Natural killer cell (primary cell): ENCODE measurements at regions of chr6 and their contacts with region 1.

Region 1: GRCh38 chr6:106979427-106979884 is 4.9 kb upstream of the CD24 start:
- DNase-seq: peak; percentile 65 to 86
- ATAC-seq: peak; percentile 63 to 88 (median 85)
- H3K4me3 ChIP-seq: no peak overlapping the region
- H3K4me3 Mint-ChIP-seq: no peak overlapping the region
- H3K27ac ChIP-seq: no peak overlapping the region
- H3K27ac Mint-ChIP-seq: no peak overlapping the region
- H3K4me1 ChIP-seq: peaks cover 4% of the 10 kb centered on the region
- H3K4me1 Mint-ChIP-seq: peaks cover 0 to 6% of the 10 kb centered on the region in 2 donors
- H3K27me3 ChIP-seq: peaks cover 5% of the 10 kb centered on the region
- H3K27me3 Mint-ChIP-seq: peaks cover 16 to 32% of the 10 kb centered on the region in 2 donors
- CTCF ChIP-seq: peak; percentile 77

Region 2: GRCh38 chr6:106608062-106608668 is 371.3 kb before region 1 on chr6:
- intact Hi-C with region 1: loop called (anchors 5 kb)
- DNase-seq: peak in 1 of 2 donors; percentile 73
- ATAC-seq: peak; percentile 83 to 92 (median 87)
- H3K4me3 ChIP-seq: no peak overlapping the region
- H3K4me3 Mint-ChIP-seq: no peak overlapping the region
- H3K27ac ChIP-seq: no peak overlapping the region
- H3K27ac Mint-ChIP-seq: no peak overlapping the region
- H3K4me1 ChIP-seq: no peaks in the 10 kb centered on the region
- H3K4me1 Mint-ChIP-seq: peaks cover 5% of the 10 kb centered on the region in 2 donors
- H3K27me3 ChIP-seq: no peaks in the 10 kb centered on the region
- H3K27me3 Mint-ChIP-seq: no peaks in the 10 kb centered on the region
- CTCF ChIP-seq: peak; percentile 76

Region 3: DNA sequence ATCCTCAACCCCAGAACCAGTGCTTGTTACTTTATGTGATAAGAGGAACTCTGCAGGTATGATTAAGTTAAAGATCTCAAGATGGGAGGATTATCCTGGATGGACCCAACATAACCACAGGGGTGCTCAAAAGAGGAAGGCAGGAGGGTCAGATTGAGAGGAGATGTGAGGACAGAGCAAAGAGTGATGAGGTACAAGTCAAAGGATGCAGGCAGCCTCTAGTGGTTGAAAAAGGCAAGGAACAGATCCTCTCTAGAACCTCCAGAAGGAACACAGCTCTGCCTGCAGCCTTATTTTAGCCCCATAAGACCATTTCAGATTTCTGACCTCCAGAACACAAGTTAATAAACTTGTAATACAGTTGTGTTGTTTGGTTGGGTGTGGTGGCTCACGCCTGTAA is 438.7 kb after region 1 on chr6:
- intact Hi-C with region 1: no loop called
- DNase-seq: no peak
- ATAC-seq: no peak
- H3K4me3 ChIP-seq: no peak overlapping the region
- H3K4me3 Mint-ChIP-seq: no peak overlapping the region
- H3K27ac ChIP-seq: no peak overlapping the region
- H3K27ac Mint-ChIP-seq: no peak overlapping the region
- H3K4me1 ChIP-seq: no peaks in the 10 kb centered on the region
- H3K4me1 Mint-ChIP-seq: peaks cover 9 to 16% of the 10 kb centered on the region in 2 donors
- H3K27me3 ChIP-seq: no peaks in the 10 kb centered on the region
- H3K27me3 Mint-ChIP-seq: no peaks in the 10 kb centered on the region
- CTCF ChIP-seq: no peak